Activated T-helper 1 cell treated with anti-CD3 and anti-CD28 coated beads, Interleukin-12 subunit alpha, Interleukin-12 subunit beta, Interleukin-2, Interleukin-4 antibody, amounts not matched to agents 30 ng/mL and 10 ng/mL and 1 ng/mL, durations not matched to agents 14 hours and 24 hours and 36 hours (primary cell): ENCODE measurements at regions of chr1 and their contacts with region 1.

Region 1: DNA sequence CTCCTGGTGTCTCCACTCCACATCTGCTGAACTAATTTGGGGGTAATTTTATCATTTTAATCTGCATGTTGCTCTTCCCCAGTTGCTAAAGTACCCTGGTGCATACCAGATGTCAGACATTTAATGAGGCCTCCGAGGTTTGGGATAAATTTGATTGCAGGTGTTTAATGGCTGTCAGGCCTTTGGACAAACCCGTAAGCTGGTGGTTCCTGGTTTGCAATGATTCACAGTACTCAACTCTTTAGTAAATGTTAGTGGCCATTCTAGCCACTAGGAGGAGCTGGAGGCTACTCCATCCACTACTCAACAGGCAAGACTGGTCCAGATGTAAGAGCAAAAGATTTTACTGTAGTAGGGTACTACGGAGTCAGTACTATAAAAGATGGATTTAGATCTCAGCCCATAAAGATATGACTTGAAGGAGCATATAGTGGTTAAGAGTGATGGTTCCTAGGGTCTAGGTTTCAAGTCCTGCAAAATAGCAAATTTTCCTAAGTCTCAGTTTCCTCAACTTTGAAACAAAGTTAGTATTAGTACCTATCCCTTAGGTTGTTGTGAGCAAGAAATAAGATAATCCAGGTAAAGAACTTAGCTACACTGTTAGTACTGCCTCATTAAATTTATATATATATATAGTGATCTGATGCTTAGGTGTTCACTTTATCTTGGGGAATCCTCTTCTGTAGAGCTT is 132.8 kb downstream of the SNX7 start:
- DNase-seq: peak; percentile 36
- H3K4me3 Mint-ChIP-seq: no peak overlapping the region
- H3K27ac Mint-ChIP-seq: no peak overlapping the region
- H3K4me1 Mint-ChIP-seq: peaks cover 16% of the 10 kb centered on the region
- H3K27me3 Mint-ChIP-seq: peaks cover 13% of the 10 kb centered on the region

Region 2: GRCh38 chr1:98849969-98850636 is 55.8 kb after region 1 on chr1:
- intact Hi-C with region 1: no loop called
- DNase-seq: no peak
- H3K4me3 Mint-ChIP-seq: no peak overlapping the region
- H3K27ac Mint-ChIP-seq: no peak overlapping the region
- H3K4me1 Mint-ChIP-seq: peaks cover 9% of the 10 kb centered on the region
- H3K27me3 Mint-ChIP-seq: no peaks in the 10 kb centered on the region

Region 3: DNA sequence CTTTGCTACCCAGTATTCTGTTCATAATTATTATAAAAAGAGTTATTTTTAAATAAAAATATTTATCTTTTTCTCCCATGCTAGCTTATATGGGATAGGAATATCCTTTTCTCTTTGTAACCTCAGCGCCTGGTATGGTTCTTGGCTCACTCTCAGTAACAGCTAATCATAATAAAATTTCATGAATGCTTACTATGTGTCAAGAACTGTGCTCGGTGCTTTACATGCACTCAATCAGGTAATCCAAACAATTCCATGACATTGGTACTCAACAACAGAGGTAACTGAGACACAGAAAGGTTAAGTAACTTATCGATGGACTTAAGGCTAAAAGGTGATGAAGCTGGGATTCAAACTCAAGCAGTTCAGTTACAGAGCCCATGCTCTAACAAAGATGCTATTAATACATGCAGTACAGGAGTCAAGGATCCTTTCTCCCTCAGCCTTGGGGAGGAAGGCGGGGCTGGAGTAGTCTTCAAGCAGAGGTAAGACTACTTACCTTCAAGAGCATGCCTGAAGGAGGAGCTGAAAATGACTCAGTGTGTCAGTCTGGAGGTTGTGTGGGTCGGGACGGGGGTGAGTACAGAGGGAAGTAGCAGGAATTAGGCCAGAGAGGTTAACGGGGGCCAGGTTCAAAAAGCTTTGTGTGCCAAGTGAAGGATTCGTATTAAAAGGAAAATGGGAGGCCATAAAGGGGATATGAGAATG is 136.9 kb after region 1 on chr1:
- intact Hi-C with region 1: loop called (anchors 10 kb)
- DNase-seq: no peak
- H3K4me3 Mint-ChIP-seq: no peak overlapping the region
- H3K27ac Mint-ChIP-seq: no peak overlapping the region
- H3K4me1 Mint-ChIP-seq: no peaks in the 10 kb centered on the region
- H3K27me3 Mint-ChIP-seq: no peaks in the 10 kb centered on the region

Region 4: GRCh38 chr1:99180343-99180808 is 386.0 kb after region 1 on chr1:
- intact Hi-C with region 1: loop called (anchors 10 kb)
- DNase-seq: peak; percentile 31
- H3K4me3 Mint-ChIP-seq: no peak overlapping the region
- H3K27ac Mint-ChIP-seq: no peak overlapping the region
- H3K4me1 Mint-ChIP-seq: no peaks in the 10 kb centered on the region
- H3K27me3 Mint-ChIP-seq: peaks cover 1% of the 10 kb centered on the region

Region 5: DNA sequence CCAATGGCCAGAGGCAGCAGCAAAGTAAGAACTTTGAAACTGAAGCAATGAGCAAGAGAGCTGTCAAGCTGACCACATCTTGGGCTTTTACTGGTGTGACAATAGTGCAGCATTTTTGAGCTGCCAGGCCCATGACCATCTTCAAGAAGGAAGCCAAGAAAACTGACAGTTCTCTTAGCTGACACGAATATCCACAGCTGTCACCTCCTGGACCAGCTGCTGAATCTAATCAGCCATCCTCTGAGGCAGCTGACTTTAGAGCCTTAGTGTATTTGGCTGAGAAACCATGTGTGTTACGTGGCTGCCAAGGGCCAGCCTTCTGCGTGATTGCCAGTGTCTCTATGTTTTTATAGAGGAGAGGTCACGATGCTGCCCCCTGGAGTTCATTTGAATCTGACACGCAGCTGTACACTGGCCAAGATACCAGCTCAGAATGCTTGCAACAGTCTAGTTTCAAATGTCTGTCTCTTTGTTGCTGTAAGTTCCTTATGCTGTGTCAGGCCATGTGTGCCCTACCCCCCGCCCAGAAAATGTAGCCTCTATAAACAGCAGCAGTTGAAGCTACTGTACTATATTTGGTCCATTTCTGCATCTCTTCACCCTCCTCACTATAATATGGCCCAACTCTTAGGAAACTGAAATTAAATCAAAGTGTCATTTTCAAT is 891.3 kb after region 1 on chr1:
- intact Hi-C with region 1: loop called (anchors 1 kb)
- DNase-seq: no peak
- H3K4me3 Mint-ChIP-seq: no peak overlapping the region
- H3K27ac Mint-ChIP-seq: no peak overlapping the region
- H3K4me1 Mint-ChIP-seq: no peaks in the 10 kb centered on the region
- H3K27me3 Mint-ChIP-seq: peaks cover 1% of the 10 kb centered on the region